ENCODE measurements at regions of chr2 and their contacts with region 1.

Region 1: DNA sequence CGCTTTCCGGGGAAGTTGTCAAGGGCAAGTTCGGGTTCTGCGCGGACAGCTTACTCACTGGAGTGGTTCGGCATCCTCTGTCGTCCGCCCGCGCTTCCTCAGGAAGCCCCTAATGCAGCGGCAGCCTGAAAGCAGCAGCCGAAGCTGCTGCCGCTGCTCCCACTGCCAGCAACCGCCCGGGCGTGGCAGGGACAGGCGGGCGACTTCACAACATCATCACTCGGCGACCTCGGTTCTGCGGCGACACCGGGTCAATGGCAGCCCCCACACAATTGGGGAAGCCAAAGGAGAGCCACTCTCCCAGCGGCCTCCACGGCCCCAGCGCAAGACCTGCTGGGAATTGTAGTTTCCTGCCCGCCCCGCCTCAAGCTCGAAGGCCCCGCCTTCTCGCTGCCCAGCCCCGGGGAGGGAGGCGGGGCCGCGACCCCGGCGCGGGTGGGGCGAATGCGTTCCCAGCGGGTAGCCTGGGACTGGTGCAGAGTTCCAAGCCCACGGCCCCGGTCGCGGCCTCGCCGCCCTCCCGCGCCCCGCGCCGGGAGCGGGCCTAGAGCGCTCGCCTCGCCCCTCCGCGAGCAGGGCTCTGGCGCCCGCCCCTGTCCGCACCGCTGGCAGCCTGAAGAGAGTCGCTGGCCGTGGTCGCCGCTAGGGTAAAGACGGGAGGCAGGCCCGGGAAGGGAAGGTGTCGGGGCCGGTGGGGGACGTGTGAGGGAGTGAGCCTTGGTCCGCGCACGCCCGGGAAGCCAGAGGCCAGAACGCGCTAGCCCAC is at the starts of genes STRADB and TRAK2:
- DNase-seq: peak; percentile 84 to 95 (median 92)
- ATAC-seq: peak; percentile 96
- H3K4me3 ChIP-seq: peak within 1 kb of the TSS; percentile 96
- H3K4me3 Mint-ChIP-seq: peak within 1 kb of the TSS; percentile 94 to 98 (median 97)
- H3K27ac ChIP-seq: peak within 1 kb of the TSS; percentile 83
- H3K27ac Mint-ChIP-seq: peak within 1 kb of the TSS; percentile 85 to 97 (median 95)
- H3K4me1 ChIP-seq: peaks cover 33 to 39% of the 10 kb centered on the region in 2 donors
- H3K4me1 Mint-ChIP-seq: peaks cover 27 to 69% (median 41%) of the 10 kb centered on the region in 7 donors
- H3K27me3 ChIP-seq: no peaks in the 10 kb centered on the region
- H3K27me3 Mint-ChIP-seq: peaks cover 0 to 8% (median 0%) of the 10 kb centered on the region in 5 donors
- total RNA-seq, gene STRADB: 11.9 to 18.4 (median 16.1) TPM
- total RNA-seq, gene TRAK2: 27.8 to 47.6 (median 35.2) TPM

Region 2: DNA sequence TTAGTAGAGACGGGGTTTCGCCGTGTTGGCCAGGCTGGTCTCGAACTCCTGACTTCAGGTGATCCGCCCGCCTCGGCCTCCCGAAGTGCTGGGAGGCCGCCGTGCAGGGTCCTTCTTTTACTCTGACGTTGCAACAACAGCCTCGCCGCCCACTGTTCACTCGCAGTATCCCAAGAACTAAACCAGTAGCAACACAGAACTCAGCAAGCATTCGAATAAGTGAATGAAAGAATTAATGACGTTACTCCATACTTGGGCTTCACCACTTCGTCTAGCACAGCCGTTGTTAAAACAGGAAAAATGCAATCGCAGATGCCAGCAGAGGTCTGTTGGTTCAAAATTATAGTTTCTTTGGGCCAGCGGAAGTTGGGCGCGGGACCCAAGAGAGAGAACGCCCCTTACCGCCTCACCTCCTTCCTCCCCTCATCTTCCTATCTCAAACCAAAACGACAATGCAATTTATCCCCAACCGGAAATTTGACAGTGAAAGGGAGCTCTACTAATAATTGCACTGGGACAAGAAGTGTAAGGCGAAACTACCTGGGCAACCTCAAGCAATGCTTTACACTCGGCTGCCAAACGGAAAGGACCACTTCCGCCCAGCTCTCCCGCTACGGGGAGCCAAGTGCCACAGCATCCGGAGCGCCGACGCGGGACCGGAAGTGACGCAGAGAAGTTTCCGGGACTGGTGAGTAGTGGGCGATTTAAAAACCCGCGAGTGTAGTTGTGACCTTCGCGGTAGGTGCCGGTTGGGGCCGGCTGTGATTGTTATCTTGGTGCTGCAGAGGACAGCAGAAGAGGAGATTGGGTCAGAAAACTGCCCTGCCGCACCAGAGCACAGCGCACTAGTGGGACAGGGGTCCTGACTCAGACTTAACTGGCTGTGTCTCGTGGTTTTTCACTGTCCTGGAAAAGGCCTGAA is 562.5 kb before region 1 on chr2 and contains the starts of genes NIF3L1 and PPIL3:
- CTCF ChIA-PET with region 1: no interaction called
- POLR2A ChIA-PET with region 1: interaction called, 7 read pairs
- intact Hi-C with region 1: loop called (anchors 1 kb)
- DNase-seq: peak; percentile 88 to 97 (median 95)
- ATAC-seq: peak; percentile 89
- H3K4me3 ChIP-seq: peak within 1 kb of the TSS; percentile 83
- H3K4me3 Mint-ChIP-seq: peak within 1 kb of the TSS; percentile 88 to 100 (median 96)
- H3K27ac ChIP-seq: peak within 1 kb of the TSS; percentile 86
- H3K27ac Mint-ChIP-seq: peak within 1 kb of the TSS; percentile 97 to 100 (median 100)
- H3K4me1 ChIP-seq: peaks cover 23 to 26% of the 10 kb centered on the region in 2 donors
- H3K4me1 Mint-ChIP-seq: peaks cover 35 to 75% (median 60%) of the 10 kb centered on the region in 7 donors
- H3K27me3 ChIP-seq: no peaks in the 10 kb centered on the region
- H3K27me3 Mint-ChIP-seq: no peaks in the 10 kb centered on the region
- total RNA-seq, gene NIF3L1: 11.5 to 33.9 (median 31.4) TPM
- total RNA-seq, gene PPIL3: 28.5 to 69.7 (median 49.1) TPM

Region 3: DNA sequence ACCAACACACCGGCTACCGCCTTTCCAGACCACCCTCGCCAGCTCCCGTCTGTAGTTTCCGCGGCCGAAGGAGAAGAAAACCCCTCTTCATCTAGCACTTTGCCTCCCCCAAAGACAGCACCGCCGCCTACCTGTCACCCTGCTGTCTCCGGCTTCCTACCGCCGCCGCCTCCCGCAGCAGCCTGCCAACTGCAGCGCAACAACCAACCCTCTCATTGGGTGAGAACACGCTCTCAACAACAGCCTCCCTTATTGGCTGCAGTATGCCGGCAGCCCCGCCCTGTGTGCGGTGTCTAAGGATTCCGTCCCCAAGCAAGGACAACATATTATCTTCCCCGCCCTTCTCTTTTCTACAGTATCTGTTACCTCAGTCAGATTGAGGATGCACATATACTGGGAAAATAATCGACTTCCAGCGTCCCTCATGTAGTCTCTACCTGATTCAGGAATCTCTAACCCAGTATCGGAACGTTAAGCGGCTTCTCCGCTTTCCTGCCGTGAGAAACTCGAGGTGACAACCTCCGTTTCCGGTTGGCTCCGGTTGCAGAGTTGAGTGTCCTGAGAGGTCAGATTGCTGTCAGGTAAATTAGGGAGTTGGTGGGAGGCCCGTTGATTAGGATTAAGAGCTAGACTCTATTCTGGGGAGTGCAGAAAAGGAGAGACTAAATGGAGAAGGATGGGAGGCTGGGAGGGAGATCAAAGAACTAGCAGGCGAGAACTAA is 379.8 kb before region 1 on chr2 and contains the starts of genes HYCC2 and NDUFB3:
- CTCF ChIA-PET with region 1: interaction called, 9 read pairs
- POLR2A ChIA-PET with region 1: no interaction called
- intact Hi-C with region 1: loop called (anchors 1 kb)
- DNase-seq: peak; percentile 79 to 96 (median 95)
- ATAC-seq: peak; percentile 98
- H3K4me3 ChIP-seq: peak within 1 kb of the TSS; percentile 92
- H3K4me3 Mint-ChIP-seq: peak within 1 kb of the TSS; percentile 91 to 99 (median 94)
- H3K27ac ChIP-seq: peak within 1 kb of the TSS; percentile 83
- H3K27ac Mint-ChIP-seq: peak within 1 kb of the TSS; percentile 86 to 99 (median 95)
- H3K4me1 ChIP-seq: peaks cover 32 to 36% of the 10 kb centered on the region in 2 donors
- H3K4me1 Mint-ChIP-seq: peaks cover 31 to 74% (median 55%) of the 10 kb centered on the region in 7 donors
- H3K27me3 ChIP-seq: no peaks in the 10 kb centered on the region
- H3K27me3 Mint-ChIP-seq: no peaks in the 10 kb centered on the region
- total RNA-seq, gene HYCC2: 34.8 to 38.3 (median 36.1) TPM
- total RNA-seq, gene NDUFB3: 18.3 to 109 (median 38.3) TPM

Region 4: DNA sequence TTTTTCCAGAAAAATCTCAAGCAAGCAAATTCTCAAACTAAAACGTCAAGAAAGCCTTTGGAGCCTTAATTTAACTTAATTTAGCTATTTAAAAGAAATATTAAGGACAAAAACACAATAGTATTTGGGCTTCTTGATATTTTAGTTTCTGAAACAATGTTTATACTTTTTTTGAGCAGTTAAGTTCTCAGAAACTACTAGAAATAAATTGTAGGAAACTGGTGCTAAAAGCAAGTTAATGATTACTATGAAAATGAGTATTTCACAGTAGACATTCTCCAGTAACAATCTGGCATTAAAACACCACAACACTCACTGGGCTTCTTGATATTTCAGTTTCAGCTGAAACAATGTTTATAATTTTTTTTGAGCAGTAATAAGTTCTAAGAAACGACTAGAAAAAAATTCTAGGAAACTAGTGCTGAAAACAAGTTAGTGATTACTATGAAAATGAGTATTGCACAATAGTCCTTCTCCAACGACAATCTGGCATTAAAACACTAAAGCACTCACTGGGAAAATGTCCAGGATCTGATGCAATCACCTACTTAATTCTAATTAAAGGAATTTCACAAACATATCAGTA is 45.3 kb before region 1 on chr2:
- CTCF ChIA-PET with region 1: interaction called, 7 read pairs
- POLR2A ChIA-PET with region 1: interaction called, 3 read pairs
- intact Hi-C with region 1: loop called in 1 of 2 experiments (anchors 1 kb)
- DNase-seq: no peak
- ATAC-seq: no peak
- H3K4me3 ChIP-seq: no peak overlapping the region
- H3K4me3 Mint-ChIP-seq: peak overlapping the region in 4 of 10 donors; percentile 19 to 54 (median 22)
- H3K27ac ChIP-seq: peak overlapping the region; percentile 36
- H3K27ac Mint-ChIP-seq: peak overlapping the region in 5 of 9 donors; percentile 16 to 81 (median 28)
- H3K4me1 ChIP-seq: peaks cover 0 to 21% of the 10 kb centered on the region in 2 donors
- H3K4me1 Mint-ChIP-seq: peaks cover 13 to 61% (median 50%) of the 10 kb centered on the region in 7 donors
- H3K27me3 ChIP-seq: no peaks in the 10 kb centered on the region
- H3K27me3 Mint-ChIP-seq: no peaks in the 10 kb centered on the region

Region 5: GRCh38 chr2:201440182-201440581 is 11.3 kb before region 1 on chr2:
- CTCF ChIA-PET with region 1: interaction called, 5 read pairs
- POLR2A ChIA-PET with region 1: interaction called, 8 read pairs
- intact Hi-C with region 1: loop called in 1 of 2 experiments (anchors 1 kb)
- DNase-seq: no peak
- ATAC-seq: no peak
- H3K4me3 ChIP-seq: no peak overlapping the region
- H3K4me3 Mint-ChIP-seq: no peak overlapping the region
- H3K27ac ChIP-seq: no peak overlapping the region
- H3K27ac Mint-ChIP-seq: peak overlapping the region in 4 of 9 donors; percentile 8 to 65 (median 31)
- H3K4me1 ChIP-seq: peaks cover 0 to 5% of the 10 kb centered on the region in 2 donors
- H3K4me1 Mint-ChIP-seq: peaks cover 20 to 57% (median 46%) of the 10 kb centered on the region in 7 donors
- H3K27me3 ChIP-seq: no peaks in the 10 kb centered on the region
- H3K27me3 Mint-ChIP-seq: no peaks in the 10 kb centered on the region

Region 6: GRCh38 chr2:202033321-202034248 is 582.1 kb after region 1 on chr2 and contains the start of gene FZD7:
- CTCF ChIA-PET with region 1: no interaction called
- POLR2A ChIA-PET with region 1: no interaction called
- intact Hi-C with region 1: loop called in 1 of 2 experiments (anchors 1 kb)
- DNase-seq: peak; percentile 70 to 87 (median 81)
- ATAC-seq: peak; percentile 92
- H3K4me3 ChIP-seq: peak within 1 kb of the TSS; percentile 91
- H3K4me3 Mint-ChIP-seq: peak within 1 kb of the TSS in 9 of 10 donors; percentile 87 to 96 (median 92)
- H3K27ac ChIP-seq: peak within 1 kb of the TSS; percentile 44
- H3K27ac Mint-ChIP-seq: peak within 1 kb of the TSS in 8 of 9 donors; percentile 46 to 83 (median 72)
- H3K4me1 ChIP-seq: peaks cover 9 to 11% of the 10 kb centered on the region in 2 donors
- H3K4me1 Mint-ChIP-seq: peaks cover 6 to 17% (median 14%) of the 10 kb centered on the region in 7 donors
- H3K27me3 ChIP-seq: peaks cover 6 to 22% of the 10 kb centered on the region in 2 donors
- H3K27me3 Mint-ChIP-seq: peaks cover 0 to 45% (median 7%) of the 10 kb centered on the region in 5 donors
- total RNA-seq, gene FZD7: 0.27 to 0.99 (median 0.43) TPM

Region 7: GRCh38 chr2:202375609-202376408 is 924.3 kb after region 1 on chr2 and contains the start of gene BMPR2:
- CTCF ChIA-PET with region 1: no interaction called
- POLR2A ChIA-PET with region 1: no interaction called
- intact Hi-C with region 1: loop called in 1 of 2 experiments (anchors 5 kb)
- DNase-seq: peak; percentile 68 to 94 (median 81)
- ATAC-seq: peak; percentile 90
- H3K4me3 ChIP-seq: peak within 1 kb of the TSS; percentile 95
- H3K4me3 Mint-ChIP-seq: peak within 1 kb of the TSS; percentile 94 to 100 (median 98)
- H3K27ac ChIP-seq: peak within 1 kb of the TSS; percentile 81
- H3K27ac Mint-ChIP-seq: peak within 1 kb of the TSS; percentile 82 to 98 (median 92)
- H3K4me1 ChIP-seq: peaks cover 0 to 3% of the 10 kb centered on the region in 2 donors
- H3K4me1 Mint-ChIP-seq: peaks cover 13 to 41% (median 29%) of the 10 kb centered on the region in 7 donors
- H3K27me3 ChIP-seq: no peaks in the 10 kb centered on the region
- H3K27me3 Mint-ChIP-seq: peaks cover 0 to 28% (median 0%) of the 10 kb centered on the region in 5 donors
- total RNA-seq, gene BMPR2: 8.0 to 33.1 (median 15.2) TPM

Measured in naive thymus-derived CD4-positive, alpha-beta T cell (primary cell).